ENCODE measurements at regions of chr15 and their contacts with region 1.

Region 1: DNA sequence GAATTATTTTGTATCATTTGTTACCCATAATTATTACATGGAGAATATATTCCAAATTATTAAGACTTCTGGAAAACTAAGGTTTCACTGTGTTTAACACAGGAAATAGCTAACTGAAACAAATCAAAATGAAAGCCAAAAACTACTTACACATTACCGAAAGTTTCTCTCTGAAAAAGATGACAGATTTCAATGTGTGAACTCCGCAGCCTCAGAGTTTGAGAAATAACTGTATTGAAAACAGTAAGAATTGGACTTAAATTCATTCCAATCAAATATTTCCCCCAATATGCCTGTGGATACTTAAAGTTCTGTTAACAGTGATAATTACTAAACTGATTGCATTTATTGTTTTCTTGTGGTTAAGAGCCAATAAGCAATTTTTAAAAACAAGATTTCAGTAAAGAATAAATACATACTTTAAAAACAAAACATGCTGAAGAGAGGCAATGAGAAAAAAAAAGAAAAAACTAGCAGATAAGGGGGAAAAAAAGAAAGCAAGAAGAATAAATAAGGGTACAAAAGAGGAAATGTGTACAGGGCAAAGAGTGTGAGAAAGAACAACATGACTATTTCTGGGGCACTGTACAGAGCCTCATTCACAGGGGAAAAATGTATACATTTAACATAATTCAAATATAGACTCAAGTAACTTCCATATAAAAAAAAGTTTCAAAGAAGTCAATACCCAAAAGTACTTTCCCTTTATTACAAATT is 30.7 kb downstream of the DENND4A start:
- DNase-seq: no peak
- H3K4me3 Mint-ChIP-seq: no peak overlapping the region
- H3K27ac Mint-ChIP-seq: peak overlapping the region; percentile 5
- H3K4me1 Mint-ChIP-seq: peaks cover 40% of the 10 kb centered on the region
- H3K27me3 Mint-ChIP-seq: no peaks in the 10 kb centered on the region

Region 2: DNA sequence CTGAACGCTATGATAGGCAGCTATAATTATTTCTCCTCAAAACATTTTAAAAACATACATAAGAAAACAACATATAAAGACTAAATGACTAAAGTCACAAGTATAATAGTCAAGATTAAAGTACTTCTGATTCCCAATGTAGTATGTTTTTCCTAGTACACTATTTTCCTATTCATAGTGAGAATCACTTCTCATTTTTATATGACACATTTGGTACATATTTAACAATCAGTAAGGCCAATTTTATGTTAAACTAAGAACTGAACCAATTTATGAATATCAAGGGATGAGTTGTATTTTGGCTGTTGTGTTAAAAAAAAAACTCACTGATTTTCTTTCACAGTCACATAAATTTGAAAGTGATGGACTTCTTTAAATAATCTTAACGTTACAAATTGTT is 49.0 kb before region 1 on chr15:
- CTCF ChIA-PET with region 1: interaction called, 3 read pairs
- POLR2A ChIA-PET with region 1: no interaction called
- intact Hi-C with region 1: loop called (anchors 5 kb)
- DNase-seq: no peak
- H3K4me3 Mint-ChIP-seq: no peak overlapping the region
- H3K27ac Mint-ChIP-seq: no peak overlapping the region
- H3K4me1 Mint-ChIP-seq: peaks cover 12% of the 10 kb centered on the region
- H3K27me3 Mint-ChIP-seq: no peaks in the 10 kb centered on the region

Region 3: GRCh38 chr15:65773386-65774111 is 12.2 kb after region 1 on chr15:
- CTCF ChIA-PET with region 1: no interaction called
- POLR2A ChIA-PET with region 1: no interaction called
- intact Hi-C with region 1: loop called (anchors 1 kb)
- DNase-seq: peak; percentile 52
- H3K4me3 Mint-ChIP-seq: no peak overlapping the region
- H3K27ac Mint-ChIP-seq: peak overlapping the region; percentile 53
- H3K4me1 Mint-ChIP-seq: peaks cover 40% of the 10 kb centered on the region
- H3K27me3 Mint-ChIP-seq: no peaks in the 10 kb centered on the region

Measured in activated CD4-positive, alpha-beta memory T cell treated with anti-CD3 and anti-CD28 coated beads for 36 hours (primary cell).